CD14-positive monocyte (primary cell): ENCODE measurements at regions of chr9 and their contacts with region 1.

Region 1: GRCh38 chr9:132669698-132670456 is at the start of gene DDX31:
- DNase-seq: peak; percentile 79 to 80 (median 80)
- H3K4me3 ChIP-seq: peak within 1 kb of the TSS; percentile 88 to 99 (median 95)
- H3K4me3 Mint-ChIP-seq: peak within 1 kb of the TSS; percentile 86 to 93
- H3K27ac ChIP-seq: peak within 1 kb of the TSS; percentile 94 to 95
- H3K27ac Mint-ChIP-seq: peak within 1 kb of the TSS; percentile 87 to 97 (median 96)
- H3K4me1 ChIP-seq: peaks cover 22 to 38% of the 10 kb centered on the region in 2 donors
- H3K4me1 Mint-ChIP-seq: peaks cover 39% of the 10 kb centered on the region
- H3K27me3 ChIP-seq: no peaks in the 10 kb centered on the region
- H3K27me3 Mint-ChIP-seq: no peaks in the 10 kb centered on the region
- CTCF ChIP-seq: no peak
- polyA plus RNA-seq, gene DDX31: 1.1 to 4.2 (median 1.5) TPM

Region 2: GRCh38 chr9:132406554-132407122 is 263.2 kb before region 1 on chr9 and contains the start of gene TTF1:
- intact Hi-C with region 1: loop called in 1 of 2 experiments (anchors 5 kb)
- DNase-seq: peak; percentile 91 to 95 (median 93)
- H3K4me3 ChIP-seq: peak within 1 kb of the TSS; percentile 48 to 93 (median 87)
- H3K4me3 Mint-ChIP-seq: peak within 1 kb of the TSS; percentile 92 to 94
- H3K27ac ChIP-seq: peak within 1 kb of the TSS; percentile 3 to 68
- H3K27ac Mint-ChIP-seq: peak within 1 kb of the TSS; percentile 79 to 92 (median 86)
- H3K4me1 ChIP-seq: peaks cover 39 to 41% of the 10 kb centered on the region in 2 donors
- H3K4me1 Mint-ChIP-seq: peaks cover 43% of the 10 kb centered on the region
- H3K27me3 ChIP-seq: peaks cover 22 to 32% of the 10 kb centered on the region in 2 donors
- H3K27me3 Mint-ChIP-seq: peaks cover 24 to 32% (median 31%) of the 10 kb centered on the region in 3 donors
- CTCF ChIP-seq: no peak
- polyA plus RNA-seq, gene TTF1: 2.2 to 5.8 (median 4.1) TPM

Region 3: DNA sequence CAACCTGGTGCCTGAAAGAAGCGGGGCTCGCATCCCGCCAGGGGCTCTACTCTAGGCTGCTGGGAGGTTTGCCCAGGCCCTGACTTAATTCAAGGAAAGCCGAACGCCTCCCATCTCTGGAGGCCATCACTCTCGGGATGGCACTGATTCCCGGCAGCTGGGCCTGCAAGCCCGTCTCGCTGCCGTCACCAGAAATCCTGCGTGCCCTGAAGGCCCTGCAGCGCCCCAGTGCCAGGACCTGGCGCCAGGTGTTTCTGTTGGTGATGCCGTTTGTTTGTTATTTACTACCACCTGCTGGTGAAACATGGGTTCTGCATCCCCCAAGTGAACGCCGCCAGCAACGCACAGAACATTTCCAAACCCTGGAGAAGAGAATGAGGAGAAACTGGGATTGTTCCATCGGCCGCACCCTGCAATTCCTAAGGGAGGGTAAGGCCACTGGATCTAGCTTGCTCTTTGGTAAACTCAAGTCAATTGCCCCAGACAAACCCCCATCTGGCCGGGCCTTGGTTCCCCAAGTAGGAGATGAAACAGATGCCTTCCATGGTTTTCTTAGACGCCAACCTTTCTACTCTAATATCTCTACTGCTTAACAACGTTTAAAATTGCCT is 130.3 kb after region 1 on chr9:
- intact Hi-C with region 1: no loop called
- DNase-seq: peak; percentile 35 to 62 (median 47)
- H3K4me3 ChIP-seq: no peak overlapping the region
- H3K4me3 Mint-ChIP-seq: peak overlapping the region in 1 of 2 donors; percentile 42
- H3K27ac ChIP-seq: no peak overlapping the region
- H3K27ac Mint-ChIP-seq: no peak overlapping the region
- H3K4me1 ChIP-seq: peaks cover 3 to 4% of the 10 kb centered on the region in 2 donors
- H3K4me1 Mint-ChIP-seq: peaks cover 12% of the 10 kb centered on the region
- H3K27me3 ChIP-seq: peaks cover 0 to 16% of the 10 kb centered on the region in 2 donors
- H3K27me3 Mint-ChIP-seq: peaks cover 22 to 28% (median 23%) of the 10 kb centered on the region in 3 donors
- CTCF ChIP-seq: peak; percentile 95

Region 4: DNA sequence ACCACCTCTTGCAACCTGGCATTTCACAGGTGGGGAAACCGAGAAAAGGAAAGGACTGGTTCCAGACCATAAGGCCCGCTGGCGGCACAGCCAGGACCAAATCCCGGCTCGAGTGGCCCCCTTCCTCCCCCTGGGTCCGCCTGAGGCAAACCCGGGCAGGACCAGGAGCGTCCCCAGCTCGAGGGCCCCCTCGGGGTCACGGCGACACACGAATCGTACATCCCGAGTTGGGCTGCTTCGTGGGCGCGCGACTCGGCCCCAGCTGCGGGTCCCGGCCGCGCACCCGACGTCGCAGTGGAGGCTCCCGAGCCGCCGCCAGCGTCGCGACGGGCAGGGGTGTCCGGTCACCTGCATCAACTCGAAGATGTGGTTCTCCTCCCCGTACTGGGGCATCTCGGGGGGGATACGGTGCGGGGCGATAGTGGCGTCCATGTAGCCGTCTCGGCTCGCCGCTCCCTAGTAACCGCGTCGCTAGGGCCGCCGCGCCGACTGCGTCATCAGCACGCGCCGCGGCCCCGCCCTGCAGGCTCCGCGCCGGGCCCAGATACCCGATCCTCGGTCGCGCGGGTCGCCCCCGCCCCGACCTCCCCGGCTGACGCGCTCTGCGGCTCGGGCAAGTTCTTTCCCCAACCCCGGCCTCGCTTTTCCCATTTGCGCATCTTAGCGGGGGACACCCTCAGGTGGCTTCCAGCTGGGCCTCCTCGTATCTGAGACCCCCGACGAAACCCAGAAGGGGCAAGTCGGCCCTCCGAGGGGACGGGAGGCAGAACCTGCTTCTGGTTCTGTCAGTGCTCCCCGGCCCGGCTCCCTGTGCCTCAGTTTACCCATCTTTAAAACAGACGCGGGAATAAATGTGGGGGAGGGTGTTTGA is 208.2 kb after region 1 on chr9 and contains the start of gene AK8:
- intact Hi-C with region 1: loop called (anchors 2 to 10 kb)
- DNase-seq: peak; percentile 62 to 75 (median 67)
- H3K4me3 ChIP-seq: peak within 1 kb of the TSS; percentile 80 to 97 (median 93)
- H3K4me3 Mint-ChIP-seq: peak within 1 kb of the TSS; percentile 79 to 80
- H3K27ac ChIP-seq: peak within 1 kb of the TSS in 1 of 2 donors; percentile 73
- H3K27ac Mint-ChIP-seq: peak within 1 kb of the TSS in 5 of 7 donors; percentile 33 to 88 (median 78)
- H3K4me1 ChIP-seq: peaks cover 13 to 25% of the 10 kb centered on the region in 2 donors
- H3K4me1 Mint-ChIP-seq: peaks cover 15% of the 10 kb centered on the region
- H3K27me3 ChIP-seq: peaks cover 0 to 9% of the 10 kb centered on the region in 2 donors
- H3K27me3 Mint-ChIP-seq: peaks cover 10 to 17% (median 17%) of the 10 kb centered on the region in 3 donors
- CTCF ChIP-seq: no peak
- polyA plus RNA-seq, gene AK8: 0.08 TPM in 1 of 3 donors, not detected in the others